ENCODE measurements at regions of chr10 and their contacts with region 1.

Region 1: DNA sequence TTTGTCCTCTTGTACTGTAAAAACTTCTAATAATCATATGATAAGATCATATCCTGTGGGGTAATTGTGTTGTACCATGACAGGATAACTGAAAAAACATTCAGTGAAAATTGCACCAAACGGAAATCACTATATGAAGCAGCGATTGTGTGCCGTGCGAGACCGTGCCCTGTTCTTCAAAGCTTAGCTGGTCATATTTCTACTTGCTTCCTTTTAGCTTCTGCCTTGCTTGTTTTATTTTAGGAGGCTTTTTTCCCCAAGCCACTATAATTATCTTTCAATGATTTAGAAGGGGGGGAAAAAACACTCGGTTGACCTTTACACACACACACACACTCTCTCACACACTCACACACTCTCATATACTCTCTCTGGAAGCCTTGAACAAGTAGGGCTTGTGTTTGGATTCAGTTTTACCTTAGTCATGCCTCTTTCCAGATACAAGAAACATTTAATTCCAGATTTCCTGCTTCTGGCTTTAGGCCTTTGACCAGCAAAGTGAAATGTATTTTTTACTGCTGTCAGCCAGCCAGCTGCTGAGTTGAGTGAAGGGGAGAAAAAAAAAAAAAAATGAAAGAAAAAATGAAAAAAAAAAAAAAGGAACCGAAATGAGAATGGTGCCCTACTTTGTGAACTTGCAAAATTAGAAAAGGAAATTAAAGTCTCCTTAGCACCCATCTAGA is 181.4 kb downstream of the ARID5B start:
- DNase-seq: peak; percentile 74
- ATAC-seq: 0 out of 2 replicates have a peak, but pooled peaks have one; percentile 2
- H3K4me3 ChIP-seq: no peak overlapping the region
- H3K27ac ChIP-seq: peak overlapping the region; percentile 91
- H3K4me1 ChIP-seq: peaks cover 34% of the 10 kb centered on the region
- H3K27me3 ChIP-seq: no peaks in the 10 kb centered on the region
- CTCF ChIP-seq: no peak
- POLR2A ChIP-seq: no peak
- RAD21 ChIP-seq: no peak

Region 2: GRCh38 chr10:61565819-61566560 is 516.9 kb before region 1 on chr10:
- CTCF ChIA-PET with region 1: no interaction called
- POLR2A ChIA-PET with region 1: no interaction called
- dilution Hi-C with region 1: no loop called
- in situ Hi-C with region 1: no loop called
- intact Hi-C with region 1: no loop called
- DNase-seq: no peak
- ATAC-seq: no peak
- H3K4me3 ChIP-seq: no peak overlapping the region
- H3K27ac ChIP-seq: no peak overlapping the region
- H3K4me1 ChIP-seq: no peaks in the 10 kb centered on the region
- H3K27me3 ChIP-seq: no peaks in the 10 kb centered on the region
- CTCF ChIP-seq: no peak
- POLR2A ChIP-seq: no peak
- RAD21 ChIP-seq: no peak

Region 3: DNA sequence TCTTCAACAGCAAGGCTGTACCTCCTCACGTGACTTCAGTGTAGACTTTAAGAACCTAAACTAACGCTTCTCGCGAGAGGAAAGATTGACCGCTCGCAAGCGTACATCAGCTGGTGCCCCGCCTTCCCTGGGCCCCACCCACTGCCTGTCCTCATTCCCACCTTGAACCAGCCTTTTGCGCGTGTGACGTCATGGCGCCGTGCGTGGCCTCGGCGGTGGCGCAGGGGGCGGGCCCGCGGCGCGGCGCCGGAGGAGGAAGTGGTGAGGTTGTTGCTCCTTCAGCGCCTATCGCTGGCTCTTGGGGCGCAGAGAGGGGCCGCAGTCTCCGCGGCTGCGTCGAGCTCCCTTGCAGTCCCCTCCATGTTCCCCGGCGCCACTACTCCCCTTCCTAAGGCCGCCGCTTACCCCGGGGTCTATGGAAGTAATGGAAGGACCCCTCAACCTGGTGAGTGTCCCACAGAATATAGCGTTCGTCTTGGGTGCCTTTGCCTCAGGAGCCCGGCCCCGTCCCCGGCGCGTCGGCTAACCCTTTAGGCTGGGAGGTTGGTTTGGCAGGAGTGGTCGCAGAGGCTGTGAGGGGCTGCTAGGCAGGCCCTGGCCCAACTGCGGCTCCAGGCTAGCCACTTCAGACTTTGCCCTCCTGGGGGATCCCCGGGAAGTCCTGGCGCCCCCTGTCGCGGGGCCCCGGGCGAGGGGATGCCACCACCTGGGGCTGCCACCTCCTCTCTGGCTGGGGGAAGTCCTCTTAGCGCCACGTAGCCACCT is 1050.4 kb after region 1 on chr10 and contains the start of gene NRBF2:
- CTCF ChIA-PET with region 1: no interaction called
- POLR2A ChIA-PET with region 1: no interaction called
- dilution Hi-C with region 1: no loop called
- in situ Hi-C with region 1: loop called (anchors 25 kb)
- intact Hi-C with region 1: no loop called
- DNase-seq: peak; percentile 97
- ATAC-seq: peak; percentile 96
- H3K4me3 ChIP-seq: peak within 1 kb of the TSS; percentile 82
- H3K27ac ChIP-seq: peak within 1 kb of the TSS; percentile 80
- H3K4me1 ChIP-seq: peaks cover 5% of the 10 kb centered on the region; the same call in 1 of the 2 replicates
- H3K27me3 ChIP-seq: no peaks in the 10 kb centered on the region
- CTCF ChIP-seq: peak; percentile 32
- POLR2A ChIP-seq: peak; percentile 98
- RAD21 ChIP-seq: no peak
- total RNA-seq, gene NRBF2: 19.9 and 26.9 TPM in 2 replicates

Measured in IMR-90 (cell line).